ENCODE measurements at regions of chr6 and their contacts with region 1.

Region 1: GRCh38 chr6:43361269-43361668 is 8.2 kb downstream of the ZNF318 start:
- DNase-seq: peak in 1 of 14 experiments; percentile 23
- ATAC-seq: peak; percentile 29
- H3K4me3 ChIP-seq: no peak overlapping the region
- H3K4me3 Mint-ChIP-seq: no peak overlapping the region
- H3K27ac ChIP-seq: no peak overlapping the region
- H3K27ac Mint-ChIP-seq: no peak overlapping the region
- H3K4me1 ChIP-seq: peaks cover 6% of the 10 kb centered on the region
- H3K4me1 Mint-ChIP-seq: peaks cover 26% of the 10 kb centered on the region
- H3K27me3 ChIP-seq: no peaks in the 10 kb centered on the region
- H3K27me3 Mint-ChIP-seq: no peaks in the 10 kb centered on the region
- CTCF ChIP-seq: no peak

Region 2: DNA sequence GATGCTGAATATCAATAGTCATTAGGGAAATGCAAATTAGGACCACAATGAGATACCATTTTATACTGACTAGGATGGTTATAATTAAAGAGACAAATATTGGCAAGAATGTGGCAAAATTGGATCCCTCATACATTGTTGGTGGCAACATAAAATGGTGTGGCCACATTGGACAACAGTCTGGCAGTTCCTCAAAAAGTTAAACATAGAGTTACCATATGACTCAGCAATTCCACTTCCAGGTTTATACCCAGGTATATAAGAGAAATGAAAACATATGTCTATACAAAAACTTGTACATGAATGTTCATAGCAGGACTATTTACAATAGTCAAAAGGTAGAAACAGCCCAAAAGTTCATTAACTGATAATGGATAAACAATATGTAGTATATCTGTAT is 50.6 kb before region 1 on chr6:
- CTCF ChIA-PET with region 1: no interaction called
- POLR2A ChIA-PET with region 1: no interaction called
- intact Hi-C with region 1: no loop called
- DNase-seq: no peak
- ATAC-seq: no peak
- H3K4me3 ChIP-seq: no peak overlapping the region
- H3K4me3 Mint-ChIP-seq: no peak overlapping the region
- H3K27ac ChIP-seq: no peak overlapping the region
- H3K27ac Mint-ChIP-seq: no peak overlapping the region
- H3K4me1 ChIP-seq: peaks cover 19% of the 10 kb centered on the region
- H3K4me1 Mint-ChIP-seq: peaks cover 7% of the 10 kb centered on the region
- H3K27me3 ChIP-seq: no peaks in the 10 kb centered on the region
- H3K27me3 Mint-ChIP-seq: no peaks in the 10 kb centered on the region
- CTCF ChIP-seq: no peak

Region 3: GRCh38 chr6:43339168-43339567 is 22.1 kb before region 1 on chr6:
- CTCF ChIA-PET with region 1: no interaction called
- POLR2A ChIA-PET with region 1: no interaction called
- intact Hi-C with region 1: no loop called
- DNase-seq: no peak
- ATAC-seq: no peak
- H3K4me3 ChIP-seq: no peak overlapping the region
- H3K4me3 Mint-ChIP-seq: no peak overlapping the region
- H3K27ac ChIP-seq: no peak overlapping the region
- H3K27ac Mint-ChIP-seq: peak overlapping the region; percentile 2
- H3K4me1 ChIP-seq: no peaks in the 10 kb centered on the region
- H3K4me1 Mint-ChIP-seq: peaks cover 9% of the 10 kb centered on the region
- H3K27me3 ChIP-seq: no peaks in the 10 kb centered on the region
- H3K27me3 Mint-ChIP-seq: no peaks in the 10 kb centered on the region
- CTCF ChIP-seq: no peak

Region 4: DNA sequence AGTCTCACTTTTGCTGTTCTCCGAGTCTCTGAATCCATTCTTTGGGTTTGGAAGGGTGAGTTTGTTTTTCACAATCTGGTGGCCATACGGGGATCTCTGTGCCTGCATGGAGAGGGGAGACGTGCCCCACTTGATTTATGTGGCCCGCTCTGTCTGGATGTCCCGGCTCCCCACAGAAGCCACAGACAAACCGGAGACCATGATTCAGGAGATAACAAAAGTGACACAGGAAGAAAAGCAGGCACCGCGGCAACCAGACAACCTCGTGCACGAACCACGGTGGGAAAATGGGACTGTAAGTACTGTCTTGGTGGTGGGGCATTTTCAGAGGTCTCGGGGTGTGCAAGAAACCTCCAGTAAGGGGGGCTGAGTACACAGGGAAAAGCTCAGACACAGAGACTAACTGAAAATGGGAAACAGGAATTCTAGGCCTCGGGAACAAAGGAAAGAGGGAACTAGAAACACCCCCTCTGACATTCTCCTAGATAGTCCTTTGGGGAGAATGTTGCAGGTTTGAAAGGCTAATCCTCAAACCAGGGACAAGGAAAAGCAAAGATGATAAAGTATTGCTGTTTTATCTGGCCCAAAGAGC is 30.3 kb after region 1 on chr6:
- CTCF ChIA-PET with region 1: interaction called, 3 read pairs
- POLR2A ChIA-PET with region 1: interaction called, 3 read pairs
- intact Hi-C with region 1: loop called in 1 of 2 experiments (anchors 2 kb)
- DNase-seq: peak in 12 of 14 experiments; percentile 14 to 83 (median 40)
- ATAC-seq: peak; percentile 78
- H3K4me3 ChIP-seq: peak overlapping the region; percentile 22
- H3K4me3 Mint-ChIP-seq: peak overlapping the region; percentile 51
- H3K27ac ChIP-seq: no peak overlapping the region
- H3K27ac Mint-ChIP-seq: peak overlapping the region; percentile 46
- H3K4me1 ChIP-seq: peaks cover 25% of the 10 kb centered on the region
- H3K4me1 Mint-ChIP-seq: peaks cover 50% of the 10 kb centered on the region
- H3K27me3 ChIP-seq: no peaks in the 10 kb centered on the region
- H3K27me3 Mint-ChIP-seq: no peaks in the 10 kb centered on the region
- CTCF ChIP-seq: no peak

Region 5: DNA sequence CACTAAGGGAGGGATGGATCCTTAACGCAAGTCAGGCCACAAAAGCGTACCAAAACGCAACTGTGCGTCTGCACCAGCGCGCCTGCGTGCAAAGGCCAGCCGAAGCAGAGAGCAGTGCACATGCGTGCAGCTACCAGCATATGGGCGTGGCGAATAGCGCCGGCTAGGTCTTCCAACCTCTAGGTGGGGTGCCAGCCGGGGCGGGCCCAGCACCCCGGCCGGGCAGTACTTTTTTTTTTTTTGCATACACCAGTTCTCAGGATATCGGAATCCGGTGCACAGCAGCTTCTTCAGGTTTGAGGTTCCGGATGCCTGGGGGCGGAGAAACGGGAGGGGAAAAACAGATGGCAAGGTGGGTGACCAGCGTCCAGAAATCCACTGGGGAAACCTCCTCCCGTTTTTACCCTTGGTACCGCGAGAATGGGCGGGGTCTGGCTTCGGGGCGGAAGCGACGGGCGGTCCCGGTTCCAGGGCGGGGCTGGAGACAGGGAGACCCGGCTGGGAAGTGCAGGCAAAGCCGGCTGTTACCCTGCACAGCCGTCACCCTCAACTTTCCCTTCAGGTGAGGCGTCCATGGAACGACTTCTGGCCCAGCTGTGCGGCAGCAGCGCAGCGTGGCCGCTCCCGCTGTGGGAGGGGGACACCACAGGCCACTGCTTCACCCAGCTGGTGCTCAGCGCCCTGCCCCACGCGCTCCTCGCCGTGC is 66.3 kb after region 1 on chr6 and contains the start of gene ABCC10:
- CTCF ChIA-PET with region 1: no interaction called
- POLR2A ChIA-PET with region 1: no interaction called
- intact Hi-C with region 1: no loop called
- DNase-seq: peak; percentile 89 to 98 (median 94)
- ATAC-seq: peak; percentile 90
- H3K4me3 ChIP-seq: peak within 1 kb of the TSS; percentile 80
- H3K4me3 Mint-ChIP-seq: peak within 1 kb of the TSS; percentile 95
- H3K27ac ChIP-seq: peak within 1 kb of the TSS; percentile 73 to 76
- H3K27ac Mint-ChIP-seq: peak within 1 kb of the TSS; percentile 93
- H3K4me1 ChIP-seq: peaks cover 29% of the 10 kb centered on the region
- H3K4me1 Mint-ChIP-seq: peaks cover 26% of the 10 kb centered on the region
- H3K27me3 ChIP-seq: no peaks in the 10 kb centered on the region
- H3K27me3 Mint-ChIP-seq: no peaks in the 10 kb centered on the region
- CTCF ChIP-seq: peak; percentile 46
- total RNA-seq, gene ABCC10: 35.7 to 38.5 TPM